Activated CD4-positive, alpha-beta T cell treated with anti-CD3 and anti-CD28 coated beads, Interleukin-2, amount 10 ng/mL, durations not matched to agents 24 days and 14 days (primary cell): ENCODE measurements at regions of chr19 and their contacts with region 1.

Region 1: DNA sequence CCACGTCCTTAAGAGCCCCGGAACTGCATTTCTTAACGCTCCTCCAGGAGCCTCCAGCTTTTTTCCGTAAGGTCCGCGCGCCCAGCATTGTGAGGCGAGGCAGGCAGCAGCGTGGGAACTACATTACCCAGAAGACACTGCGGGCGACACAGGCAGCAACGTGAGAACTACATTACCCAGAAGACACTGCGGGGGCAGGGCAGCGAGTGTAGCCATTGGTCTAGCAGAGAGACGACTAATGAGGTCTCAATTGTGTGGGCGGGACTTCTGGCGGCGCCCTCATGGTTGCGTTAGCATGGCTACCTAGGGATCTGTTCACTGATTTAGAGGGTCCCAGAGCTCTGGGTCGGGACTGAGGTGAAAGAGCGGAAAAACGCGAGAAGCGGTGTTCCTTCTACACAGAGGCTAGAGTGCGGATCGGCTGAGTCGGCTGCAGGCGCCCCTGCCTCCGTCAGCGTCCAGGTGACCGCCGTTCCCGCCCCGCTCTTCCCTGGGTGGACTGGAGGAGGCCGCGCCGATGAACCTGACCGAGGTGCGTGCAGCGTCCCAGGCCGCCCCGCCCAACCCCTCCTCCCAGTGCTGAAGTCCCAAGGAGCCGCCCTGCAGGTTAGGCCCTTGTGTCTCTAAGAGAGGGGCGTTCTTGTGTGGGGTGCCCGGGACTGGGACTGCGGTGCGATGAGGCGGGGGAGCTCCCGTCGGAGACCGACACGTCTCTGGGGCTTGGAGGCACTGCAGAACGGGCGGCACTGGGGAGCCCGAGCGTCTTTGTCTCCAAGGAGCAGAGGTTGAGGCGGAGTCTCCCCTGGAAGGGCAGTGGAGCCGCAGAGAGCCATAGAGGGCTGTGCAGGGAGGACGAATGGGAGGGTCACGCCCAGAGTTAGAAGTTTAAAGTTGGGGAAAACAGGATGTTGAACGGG is at the start of gene ZNF749:
- DNase-seq: peak; percentile 99
- H3K4me3 Mint-ChIP-seq: peak within 1 kb of the TSS; percentile 95
- H3K27ac Mint-ChIP-seq: peak within 1 kb of the TSS; percentile 95
- H3K4me1 Mint-ChIP-seq: peaks cover 19% of the 10 kb centered on the region
- H3K27me3 Mint-ChIP-seq: peaks cover 2% of the 10 kb centered on the region
- total RNA-seq, gene ZNF749: 22.5 and 26.5 TPM in 2 replicates

Region 2: DNA sequence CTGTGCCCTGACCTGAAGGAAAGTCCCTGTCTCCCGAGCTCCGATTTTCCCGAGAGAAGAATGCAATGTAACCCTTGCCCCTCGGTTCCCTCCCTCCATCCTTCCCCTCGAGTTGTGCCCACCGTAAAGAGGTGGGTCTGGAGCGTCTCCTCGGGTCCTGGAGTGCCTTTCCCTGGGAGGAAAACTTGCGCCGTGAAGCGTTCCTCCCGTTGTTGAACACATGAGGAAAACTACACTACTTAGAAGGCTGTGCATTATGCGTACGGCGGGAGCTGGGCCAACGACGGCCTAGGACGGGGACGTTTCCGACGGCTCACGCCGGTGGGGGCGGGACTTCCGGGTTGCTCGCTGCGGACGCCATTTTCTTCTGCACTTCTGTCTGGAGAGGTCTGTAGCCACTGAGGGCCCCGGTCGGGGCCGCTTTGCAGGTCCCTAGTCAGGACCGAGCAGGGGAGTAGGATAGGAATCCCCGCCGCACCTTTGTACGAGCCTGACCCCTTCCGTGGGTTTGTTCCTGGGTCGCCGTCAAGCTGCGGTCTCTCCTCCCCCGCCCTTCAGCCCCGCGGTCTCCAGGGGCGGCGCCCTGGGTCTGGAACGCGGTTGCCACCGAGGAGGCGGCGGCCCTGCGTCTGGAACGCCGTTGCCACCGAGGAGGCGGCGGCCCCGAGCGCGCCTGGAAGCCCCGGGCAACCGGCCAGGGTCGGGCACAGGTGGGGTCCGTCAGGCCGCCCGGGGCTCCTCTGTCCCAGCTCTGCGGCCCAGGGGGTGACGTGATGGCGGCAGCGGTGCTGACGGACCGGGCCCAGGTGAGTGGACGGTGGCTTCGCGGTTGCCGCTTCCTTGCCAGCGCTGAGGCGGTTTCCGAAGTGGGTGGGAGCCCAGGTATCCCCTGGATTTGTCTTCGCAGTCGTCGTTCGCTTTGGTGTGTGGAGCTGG is 243.9 kb before region 1 on chr19 and contains the start of gene ZNF264:
- intact Hi-C with region 1: loop called (anchors 2 kb)
- DNase-seq: peak; percentile 97
- H3K4me3 Mint-ChIP-seq: peak within 1 kb of the TSS; percentile 93
- H3K27ac Mint-ChIP-seq: peak within 1 kb of the TSS; percentile 85
- H3K4me1 Mint-ChIP-seq: peaks cover 20% of the 10 kb centered on the region
- H3K27me3 Mint-ChIP-seq: no peaks in the 10 kb centered on the region
- total RNA-seq, gene ZNF264: 18.0 and 19.9 TPM in 2 replicates

Region 3: GRCh38 chr19:57410877-57411671 is 24.2 kb before region 1 on chr19 and contains the start of gene ZNF17:
- intact Hi-C with region 1: loop called (anchors 1 kb)
- DNase-seq: peak; percentile 97
- H3K4me3 Mint-ChIP-seq: peak within 1 kb of the TSS; percentile 94
- H3K27ac Mint-ChIP-seq: peak within 1 kb of the TSS; percentile 80
- H3K4me1 Mint-ChIP-seq: peaks cover 14% of the 10 kb centered on the region
- H3K27me3 Mint-ChIP-seq: no peaks in the 10 kb centered on the region
- total RNA-seq, gene ZNF17: 7.4 and 7.8 TPM in 2 replicates

Region 4: GRCh38 chr19:57559404-57560025 is 124.2 kb after region 1 on chr19 and contains the start of gene ZNF550:
- intact Hi-C with region 1: loop called (anchors 1 kb)
- DNase-seq: peak; percentile 96
- H3K4me3 Mint-ChIP-seq: peak within 1 kb of the TSS; percentile 99
- H3K27ac Mint-ChIP-seq: peak within 1 kb of the TSS; percentile 94
- H3K4me1 Mint-ChIP-seq: peaks cover 23% of the 10 kb centered on the region
- H3K27me3 Mint-ChIP-seq: no peaks in the 10 kb centered on the region
- total RNA-seq, gene ZNF550: 7.4 and 9.3 TPM in 2 replicates

Region 5: DNA sequence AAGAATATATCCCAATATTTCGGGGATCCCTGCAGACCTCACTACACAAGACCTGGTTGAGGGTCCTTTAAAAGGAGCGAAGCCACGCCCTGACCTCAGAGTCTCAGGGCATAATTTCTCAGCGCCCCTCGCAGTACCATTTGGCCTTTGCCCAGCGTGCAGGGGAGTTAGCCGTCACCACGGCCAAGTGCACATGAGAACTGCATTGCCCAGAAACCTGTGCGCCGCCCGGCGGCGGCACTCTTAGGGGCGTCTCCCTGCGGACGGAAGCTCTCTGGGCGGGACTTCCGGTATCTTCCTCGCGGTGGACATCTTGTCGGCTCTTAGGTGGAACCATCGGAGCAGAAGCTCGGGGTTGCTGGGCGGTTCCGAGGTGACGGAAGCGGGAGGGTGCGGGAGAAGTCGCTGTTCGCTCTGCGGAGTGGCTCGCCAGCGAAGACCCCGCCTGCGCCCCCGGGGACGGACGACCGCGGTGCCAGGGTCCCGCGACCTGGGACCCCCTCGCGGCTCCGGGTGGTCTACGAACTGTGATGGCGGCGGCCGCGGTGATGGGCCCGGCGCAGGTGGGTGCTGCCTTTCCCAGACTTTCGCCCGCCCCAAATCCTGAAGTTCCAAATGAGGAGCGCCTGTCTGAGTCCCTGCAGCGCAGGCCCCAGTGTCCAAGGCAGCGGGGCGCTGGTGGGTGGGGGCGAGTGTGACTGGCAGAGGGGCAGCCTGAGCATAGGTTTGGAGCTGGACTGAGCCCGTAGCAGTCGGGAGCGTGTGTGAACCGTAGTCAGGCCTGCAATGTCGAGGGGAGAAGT is 178.8 kb after region 1 on chr19 and contains the start of gene ZNF134:
- intact Hi-C with region 1: loop called (anchors 1 kb)
- DNase-seq: peak; percentile 96
- H3K4me3 Mint-ChIP-seq: peak within 1 kb of the TSS; percentile 82
- H3K27ac Mint-ChIP-seq: peak within 1 kb of the TSS; percentile 71
- H3K4me1 Mint-ChIP-seq: peaks cover 11% of the 10 kb centered on the region
- H3K27me3 Mint-ChIP-seq: no peaks in the 10 kb centered on the region
- total RNA-seq, gene ZNF134: 7.2 and 9.1 TPM in 2 replicates